HEK293 (cell line): ENCODE measurements at regions of chr15 and their contacts with region 1.

Region 1: GRCh38 chr15:41892621-41893421 is 1.0 kb downstream of the SPTBN5 start:
- H3K4me3 ChIP-seq: no peak overlapping the region
- H3K27ac ChIP-seq: no peak overlapping the region
- H3K4me1 ChIP-seq: peaks cover 7% of the 10 kb centered on the region
- CTCF ChIP-seq: no peak

Region 2: DNA sequence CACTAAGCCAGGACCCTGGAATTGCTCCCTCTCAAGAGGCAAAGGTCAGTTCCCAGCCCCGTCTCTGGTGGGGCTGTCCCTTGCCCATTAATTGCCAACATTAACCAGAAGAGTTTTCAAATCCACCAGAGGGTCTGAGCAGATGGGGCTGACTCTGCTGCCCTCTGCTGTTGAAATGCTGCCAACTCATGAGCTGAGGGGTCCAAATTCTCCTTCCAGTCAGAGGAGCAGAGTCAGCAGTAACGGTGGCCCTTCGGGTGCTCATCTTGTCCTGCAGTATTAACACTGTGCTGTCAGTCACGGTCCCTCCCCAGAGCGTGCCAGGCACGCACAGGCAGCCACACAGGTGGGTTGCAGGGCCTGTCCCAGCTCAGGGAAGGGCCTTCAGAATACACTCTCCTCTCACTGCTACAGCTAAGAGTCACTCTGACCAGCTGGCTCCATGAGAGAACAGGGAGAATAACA is 11.8 kb after region 1 on chr15:
- CTCF ChIA-PET with region 1: interaction called, 10 read pairs
- POLR2A ChIA-PET with region 1: no interaction called
- H3K4me3 ChIP-seq: no peak overlapping the region
- H3K27ac ChIP-seq: no peak overlapping the region
- H3K4me1 ChIP-seq: no peaks in the 10 kb centered on the region
- CTCF ChIP-seq: peak; percentile 65